ENCODE measurements at regions of chr1 and their contacts with region 1.

Region 1: GRCh38 chr1:186680245-186681061 is at the start of gene PTGS2:
- DNase-seq: no peak
- ATAC-seq: peak; percentile 95
- H3K4me3 ChIP-seq: peak within 1 kb of the TSS; percentile 49 to 70
- H3K27ac ChIP-seq: no peak within 1 kb of the TSS
- H3K4me1 ChIP-seq: peaks cover 5% of the 10 kb centered on the region; the same call in 1 of the 2 replicates
- H3K27me3 ChIP-seq: peaks cover 19% of the 10 kb centered on the region
- CTCF ChIP-seq: peak; percentile 54
- total RNA-seq, gene PTGS2: not detected

Region 2: DNA sequence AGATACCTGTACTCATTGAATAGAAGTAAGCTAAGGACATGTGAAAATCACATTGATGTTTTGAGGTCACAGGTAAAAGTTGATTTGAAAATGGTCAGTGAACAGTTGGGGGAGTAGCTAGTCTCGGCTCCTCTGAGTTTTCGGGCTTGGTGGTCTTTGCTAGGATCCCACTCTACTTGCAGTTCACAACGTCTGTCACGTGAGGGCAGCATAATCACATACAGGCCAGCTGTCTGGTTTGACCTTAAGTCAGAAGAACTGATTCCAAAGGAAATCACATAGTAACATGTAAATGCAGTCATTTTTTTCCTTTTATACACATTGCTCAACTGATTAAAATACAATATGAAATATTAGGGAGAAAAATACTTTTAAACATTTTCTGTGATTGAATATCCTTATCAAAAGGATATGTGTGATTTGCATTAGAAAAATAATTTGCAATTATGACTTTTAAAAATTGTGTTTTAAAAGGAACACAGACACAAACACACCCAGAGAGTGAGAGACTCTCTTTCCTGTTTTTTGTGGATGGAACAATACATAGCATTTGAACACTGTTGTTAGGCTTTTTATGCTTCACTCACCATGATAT is 197.7 kb before region 1 on chr1:
- CTCF ChIA-PET with region 1: no interaction called
- POLR2A ChIA-PET with region 1: no interaction called
- in situ Hi-C with region 1: no loop called
- intact Hi-C with region 1: loop called (anchors 10 kb)
- DNase-seq: peak; percentile 51
- ATAC-seq: peak; percentile 74
- H3K4me3 ChIP-seq: no peak overlapping the region
- H3K27ac ChIP-seq: no peak overlapping the region
- H3K4me1 ChIP-seq: no peaks in the 10 kb centered on the region
- H3K27me3 ChIP-seq: no peaks in the 10 kb centered on the region
- CTCF ChIP-seq: peak; percentile 93

Region 3: GRCh38 chr1:186605762-186606350 is 74.6 kb before region 1 on chr1:
- CTCF ChIA-PET with region 1: no interaction called
- POLR2A ChIA-PET with region 1: no interaction called
- in situ Hi-C with region 1: no loop called
- intact Hi-C with region 1: no loop called
- DNase-seq: peak; percentile 20
- ATAC-seq: no peak
- H3K4me3 ChIP-seq: no peak overlapping the region
- H3K27ac ChIP-seq: no peak overlapping the region
- H3K4me1 ChIP-seq: no peaks in the 10 kb centered on the region
- H3K27me3 ChIP-seq: no peaks in the 10 kb centered on the region
- CTCF ChIP-seq: peak; percentile 62

Region 4: DNA sequence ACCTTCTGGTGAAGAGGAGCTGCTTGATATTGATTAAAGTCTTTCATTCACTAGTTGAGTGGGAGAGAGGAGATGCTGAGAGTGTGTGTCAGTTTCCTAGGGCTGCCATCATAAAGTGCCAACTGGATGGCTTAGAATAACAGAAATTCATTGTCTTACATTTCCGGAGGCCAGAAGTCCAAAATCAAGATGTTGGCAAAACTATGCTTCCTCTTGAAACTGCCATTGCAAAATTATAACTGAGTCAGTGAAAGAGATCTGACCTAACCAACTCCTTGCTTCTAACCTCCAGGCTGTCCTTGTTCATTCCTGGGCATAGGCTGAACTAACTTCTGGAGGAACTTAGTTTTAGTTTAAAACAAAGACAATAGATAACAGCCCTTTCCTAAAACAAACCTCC is 47.3 kb before region 1 on chr1:
- CTCF ChIA-PET with region 1: no interaction called
- POLR2A ChIA-PET with region 1: no interaction called
- in situ Hi-C with region 1: no loop called
- intact Hi-C with region 1: no loop called
- DNase-seq: no peak
- ATAC-seq: no peak
- H3K4me3 ChIP-seq: no peak overlapping the region
- H3K27ac ChIP-seq: no peak overlapping the region
- H3K4me1 ChIP-seq: no peaks in the 10 kb centered on the region
- H3K27me3 ChIP-seq: no peaks in the 10 kb centered on the region
- CTCF ChIP-seq: no peak

Region 5: GRCh38 chr1:186763107-186763506 is 82.7 kb after region 1 on chr1:
- CTCF ChIA-PET with region 1: no interaction called
- POLR2A ChIA-PET with region 1: no interaction called
- in situ Hi-C with region 1: no loop called
- intact Hi-C with region 1: no loop called
- DNase-seq: no peak
- ATAC-seq: no peak
- H3K4me3 ChIP-seq: no peak overlapping the region
- H3K27ac ChIP-seq: no peak overlapping the region
- H3K4me1 ChIP-seq: no peaks in the 10 kb centered on the region
- H3K27me3 ChIP-seq: no peaks in the 10 kb centered on the region
- CTCF ChIP-seq: no peak

Measured in Panc1 (cell line).